ENCODE measurements at regions of chr2 and their contacts with region 1.

Region 1: GRCh38 chr2:40101131-40101575 is 322.1 kb upstream of the THUMPD2 start:
- DNase-seq: peak; percentile 92
- ATAC-seq: peak; percentile 65
- H3K4me3 ChIP-seq: no peak overlapping the region
- H3K27ac ChIP-seq: peak overlapping the region; percentile 98
- H3K4me1 ChIP-seq: peaks cover 28% of the 10 kb centered on the region
- H3K27me3 ChIP-seq: no peaks in the 10 kb centered on the region
- CTCF ChIP-seq: no peak
- POLR2A ChIP-seq: peak; percentile 53
- RAD21 ChIP-seq: peak; percentile 5; the same call in 1 of the 2 replicates

Region 2: GRCh38 chr2:39932198-39932597 is 169.0 kb before region 1 on chr2:
- CTCF ChIA-PET with region 1: interaction called, 3 read pairs
- POLR2A ChIA-PET with region 1: no interaction called
- dilution Hi-C with region 1: no loop called
- in situ Hi-C with region 1: no loop called
- intact Hi-C with region 1: loop called (anchors 5 kb)
- DNase-seq: peak; percentile 56
- ATAC-seq: peak; percentile 42; the same call in 1 of the 2 replicates
- H3K4me3 ChIP-seq: no peak overlapping the region
- H3K27ac ChIP-seq: peak overlapping the region; percentile 78; the same call in 1 of the 2 replicates
- H3K4me1 ChIP-seq: peaks cover 9% of the 10 kb centered on the region; the same call in 1 of the 2 replicates
- H3K27me3 ChIP-seq: no peaks in the 10 kb centered on the region
- CTCF ChIP-seq: no peak
- POLR2A ChIP-seq: no peak
- RAD21 ChIP-seq: no peak

Region 3: DNA sequence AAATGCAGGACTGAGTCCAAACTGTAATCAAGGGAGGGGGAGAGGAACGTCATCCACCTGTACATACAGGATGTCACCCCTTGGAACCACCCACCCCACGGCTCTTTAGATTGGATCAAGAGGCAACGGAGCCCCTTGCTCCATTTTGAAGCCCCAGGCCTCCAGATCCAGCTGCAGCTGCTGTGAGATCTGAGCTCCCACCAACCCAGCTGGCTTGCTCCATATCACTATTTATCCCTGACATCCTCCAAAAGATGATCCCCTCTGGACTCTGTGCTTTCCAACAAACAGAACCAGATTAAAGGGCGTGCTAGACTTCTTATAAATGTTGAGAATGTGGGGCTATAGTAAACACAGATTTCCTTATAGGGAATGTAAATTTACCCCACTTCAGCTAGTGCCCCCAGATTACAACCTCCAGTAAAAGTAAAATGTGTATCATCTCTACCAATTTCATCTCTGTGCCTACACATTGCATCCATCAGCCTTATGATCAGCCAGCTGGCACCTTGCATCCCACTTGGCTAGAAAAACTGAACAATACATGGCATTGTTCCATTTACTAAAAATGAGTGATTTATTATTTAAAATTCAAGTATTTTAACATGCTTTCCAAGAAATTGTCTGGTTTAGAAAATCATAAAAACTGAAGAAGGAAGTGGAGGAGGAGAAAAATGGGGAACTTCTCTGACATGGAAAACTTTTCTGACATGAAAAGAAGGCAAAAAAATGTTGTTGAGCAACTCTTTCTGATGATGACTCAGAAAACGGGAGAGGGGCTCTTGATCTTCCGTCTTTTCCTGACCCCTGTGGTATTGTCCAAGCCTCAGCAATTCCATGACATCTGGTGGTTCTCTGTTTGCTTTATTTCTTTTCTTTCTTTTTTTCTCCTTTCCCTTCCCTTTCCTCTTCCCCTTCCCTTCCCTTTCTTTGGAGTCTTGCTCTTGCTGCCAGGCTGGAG is 59.5 kb before region 1 on chr2:
- CTCF ChIA-PET with region 1: interaction called, 3 read pairs
- POLR2A ChIA-PET with region 1: interaction called, 3 read pairs
- dilution Hi-C with region 1: no loop called
- in situ Hi-C with region 1: no loop called
- intact Hi-C with region 1: loop called (anchors 2 kb)
- DNase-seq: peak; percentile 94
- ATAC-seq: peak; percentile 45
- H3K4me3 ChIP-seq: no peak overlapping the region
- H3K27ac ChIP-seq: peak overlapping the region; percentile 87
- H3K4me1 ChIP-seq: peaks cover 26% of the 10 kb centered on the region
- H3K27me3 ChIP-seq: no peaks in the 10 kb centered on the region
- CTCF ChIP-seq: no peak
- POLR2A ChIP-seq: no peak
- RAD21 ChIP-seq: peak; percentile 5; the same call in 1 of the 2 replicates

Region 4: GRCh38 chr2:40202798-40203400 is 101.7 kb after region 1 on chr2:
- CTCF ChIA-PET with region 1: no interaction called
- POLR2A ChIA-PET with region 1: no interaction called
- dilution Hi-C with region 1: no loop called
- in situ Hi-C with region 1: no loop called
- intact Hi-C with region 1: loop called (anchors 5 kb)
- DNase-seq: peak; percentile 58
- ATAC-seq: peak; percentile 56
- H3K4me3 ChIP-seq: no peak overlapping the region
- H3K27ac ChIP-seq: peak overlapping the region; percentile 96
- H3K4me1 ChIP-seq: peaks cover 18% of the 10 kb centered on the region
- H3K27me3 ChIP-seq: no peaks in the 10 kb centered on the region
- CTCF ChIP-seq: no peak
- POLR2A ChIP-seq: no peak
- RAD21 ChIP-seq: no peak

Region 5: DNA sequence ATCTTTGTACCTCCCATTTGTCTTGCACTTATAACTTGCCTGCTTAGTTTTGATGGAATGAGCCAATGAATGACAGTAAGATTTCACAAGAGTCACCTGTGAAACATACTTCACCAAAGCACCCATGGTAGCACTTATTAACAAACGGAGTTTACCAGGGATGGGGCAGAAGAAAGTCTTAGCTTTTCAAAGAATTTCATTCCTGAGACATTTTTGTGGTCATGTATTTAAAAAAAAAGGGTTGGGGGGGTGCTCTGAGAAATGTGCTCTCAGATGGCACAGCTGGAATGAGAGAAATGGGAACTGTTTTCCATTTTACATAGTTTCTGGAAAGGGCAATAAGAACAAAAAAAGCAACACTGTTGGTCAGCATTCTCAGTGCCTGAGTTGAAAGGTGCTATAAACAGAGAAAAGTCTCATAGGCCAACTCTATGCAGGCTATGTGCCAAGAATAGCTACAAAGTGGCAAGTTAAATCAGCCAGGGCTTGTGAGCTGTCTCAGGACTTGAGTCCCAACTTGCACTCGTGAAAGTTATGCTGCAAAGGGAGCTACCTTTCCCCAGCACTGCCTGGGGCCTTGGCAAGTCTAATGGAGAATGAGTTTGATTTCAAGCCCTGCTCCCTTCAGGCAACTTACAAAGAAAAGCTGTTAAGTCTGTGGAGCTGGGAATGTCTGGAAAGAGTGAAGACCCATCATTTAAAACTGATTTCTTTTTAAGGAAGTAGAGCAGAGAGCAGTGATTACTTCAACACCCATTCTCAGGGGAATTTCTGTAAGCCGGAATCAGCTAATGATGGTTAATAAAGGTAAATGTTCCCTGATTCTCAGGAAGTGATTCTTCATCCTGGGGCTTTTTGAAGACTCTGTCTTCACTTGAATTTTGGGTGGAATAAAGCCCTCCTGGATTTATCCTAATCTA is 180.1 kb after region 1 on chr2:
- CTCF ChIA-PET with region 1: no interaction called
- POLR2A ChIA-PET with region 1: no interaction called
- dilution Hi-C with region 1: no loop called
- in situ Hi-C with region 1: no loop called
- intact Hi-C with region 1: loop called (anchors 2 kb)
- DNase-seq: peak; percentile 89
- ATAC-seq: peak; percentile 74
- H3K4me3 ChIP-seq: no peak overlapping the region
- H3K27ac ChIP-seq: peak overlapping the region; percentile 37
- H3K4me1 ChIP-seq: peaks cover 17% of the 10 kb centered on the region
- H3K27me3 ChIP-seq: no peaks in the 10 kb centered on the region
- CTCF ChIP-seq: no peak
- POLR2A ChIP-seq: no peak; the same call in 1 of the 2 replicates
- RAD21 ChIP-seq: no peak

Region 6: GRCh38 chr2:40448468-40449079 is 347.4 kb after region 1 on chr2:
- CTCF ChIA-PET with region 1: no interaction called
- POLR2A ChIA-PET with region 1: no interaction called
- dilution Hi-C with region 1: no loop called
- in situ Hi-C with region 1: no loop called
- intact Hi-C with region 1: loop called (anchors 2 kb)
- DNase-seq: peak; percentile 52
- ATAC-seq: no peak
- H3K4me3 ChIP-seq: no peak overlapping the region
- H3K27ac ChIP-seq: no peak overlapping the region
- H3K4me1 ChIP-seq: peaks cover 6% of the 10 kb centered on the region
- H3K27me3 ChIP-seq: no peaks in the 10 kb centered on the region
- CTCF ChIP-seq: peak; percentile 51
- POLR2A ChIP-seq: no peak
- RAD21 ChIP-seq: peak; percentile 44

Region 7: DNA sequence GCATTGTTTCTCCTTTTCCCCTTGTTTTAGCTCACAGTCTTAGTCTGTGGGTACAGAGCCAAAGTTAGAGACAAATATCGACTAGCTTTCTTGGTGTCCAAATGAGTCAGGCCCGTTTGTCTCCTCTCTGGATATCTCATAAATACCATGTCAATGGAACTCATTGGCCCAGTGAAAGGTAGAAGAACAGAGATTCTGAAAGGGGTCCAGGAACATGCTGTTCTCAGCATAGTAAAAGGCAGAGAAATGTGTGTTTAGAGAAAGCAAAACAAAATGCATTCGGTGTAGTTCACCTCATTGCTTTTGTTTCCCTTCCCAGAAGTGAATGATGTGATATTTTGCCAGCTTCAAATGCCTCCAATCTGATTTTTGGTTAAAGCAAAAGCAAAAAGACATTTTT is 589.4 kb after region 1 on chr2:
- CTCF ChIA-PET with region 1: no interaction called
- POLR2A ChIA-PET with region 1: no interaction called
- dilution Hi-C with region 1: no loop called
- in situ Hi-C with region 1: no loop called
- intact Hi-C with region 1: no loop called
- DNase-seq: no peak
- ATAC-seq: no peak
- H3K4me3 ChIP-seq: no peak overlapping the region
- H3K27ac ChIP-seq: no peak overlapping the region
- H3K4me1 ChIP-seq: no peaks in the 10 kb centered on the region
- H3K27me3 ChIP-seq: no peaks in the 10 kb centered on the region
- CTCF ChIP-seq: no peak
- POLR2A ChIP-seq: no peak
- RAD21 ChIP-seq: no peak

Region 8: GRCh38 chr2:40915651-40916050 is 814.5 kb after region 1 on chr2:
- CTCF ChIA-PET with region 1: no interaction called
- POLR2A ChIA-PET with region 1: no interaction called
- dilution Hi-C with region 1: no loop called
- in situ Hi-C with region 1: no loop called
- intact Hi-C with region 1: no loop called
- DNase-seq: no peak
- ATAC-seq: no peak
- H3K4me3 ChIP-seq: no peak overlapping the region
- H3K27ac ChIP-seq: no peak overlapping the region
- H3K4me1 ChIP-seq: no peaks in the 10 kb centered on the region
- H3K27me3 ChIP-seq: no peaks in the 10 kb centered on the region
- CTCF ChIP-seq: no peak
- POLR2A ChIP-seq: no peak
- RAD21 ChIP-seq: no peak

Measured in IMR-90 (cell line).